Esophagus muscularis mucosa (tissue), 4 donors: ENCODE measurements at regions of chr3 and their contacts with region 1.

Region 1: DNA sequence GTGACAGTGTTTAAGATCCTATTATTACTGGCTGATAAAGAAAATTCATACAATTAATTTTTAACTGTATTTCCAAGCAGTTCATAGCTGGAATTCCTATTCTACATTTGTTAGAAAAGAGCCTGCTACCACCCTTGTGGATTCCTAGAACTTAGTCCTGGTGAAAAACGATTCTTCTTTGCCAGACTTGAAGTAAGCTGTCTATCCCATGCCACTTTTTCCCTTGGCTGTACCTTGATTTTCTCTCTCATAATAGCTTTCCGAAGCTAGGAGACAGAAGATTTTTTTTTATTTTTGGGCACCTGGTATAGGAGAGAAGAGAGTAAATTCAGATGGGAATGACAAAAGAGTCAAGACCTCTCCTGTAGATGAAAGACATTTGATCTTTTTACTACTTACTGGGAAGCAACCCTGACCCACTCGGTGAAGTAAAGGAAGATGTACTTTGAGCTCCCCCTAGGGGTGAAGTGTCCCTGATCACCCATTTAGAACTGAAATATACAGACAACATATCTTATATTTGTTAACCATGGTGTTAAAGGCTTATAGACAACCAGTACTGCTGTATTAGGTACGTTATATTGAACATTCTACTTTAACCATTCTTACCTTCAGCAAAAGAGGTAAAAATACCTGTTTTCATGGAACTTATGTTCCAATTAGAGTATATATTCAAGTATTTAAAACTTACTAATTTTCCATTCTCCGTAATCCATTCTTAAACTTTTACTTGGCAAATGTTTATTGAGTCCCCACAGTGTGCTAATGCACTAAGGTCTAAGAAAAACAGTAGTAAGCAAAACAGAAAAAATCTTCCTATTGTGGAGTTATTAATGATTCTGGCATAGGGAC is 36.2 kb upstream of the C3orf38 start:
- DNase-seq: no peak
- H3K4me3 ChIP-seq: no peak overlapping the region
- H3K27ac ChIP-seq: no peak overlapping the region
- H3K4me1 ChIP-seq: peaks cover 0 to 14% (median 9%) of the 10 kb centered on the region in 4 donors
- H3K27me3 ChIP-seq: no peaks in the 10 kb centered on the region
- CTCF ChIP-seq: peak; percentile 54 to 69 (median 65)
- EP300 ChIP-seq: no peak
- POLR2A ChIP-seq: no peak

Region 2: GRCh38 chr3:87350364-87351199 is 763.0 kb before region 1 on chr3:
- intact Hi-C with region 1: loop called (anchors 10 kb)
- DNase-seq: no peak
- H3K4me3 ChIP-seq: no peak overlapping the region
- H3K27ac ChIP-seq: no peak overlapping the region
- H3K4me1 ChIP-seq: no peaks in the 10 kb centered on the region
- H3K27me3 ChIP-seq: no peaks in the 10 kb centered on the region
- CTCF ChIP-seq: peak in 2 of 3 experiments; percentile 70 to 83
- EP300 ChIP-seq: no peak
- POLR2A ChIP-seq: no peak

Region 3: GRCh38 chr3:87771341-87772192 is 342.0 kb before region 1 on chr3:
- intact Hi-C with region 1: loop called (anchors 10 kb)
- DNase-seq: no peak
- H3K4me3 ChIP-seq: no peak overlapping the region
- H3K27ac ChIP-seq: no peak overlapping the region
- H3K4me1 ChIP-seq: no peaks in the 10 kb centered on the region
- H3K27me3 ChIP-seq: no peaks in the 10 kb centered on the region
- CTCF ChIP-seq: peak in 2 of 3 experiments; percentile 37 to 50
- EP300 ChIP-seq: no peak
- POLR2A ChIP-seq: no peak

Region 4: GRCh38 chr3:88058591-88059368 is 54.8 kb before region 1 on chr3 and contains the starts of genes CGGBP1 and ZNF654:
- intact Hi-C with region 1: loop called (anchors 5 kb)
- DNase-seq: peak; percentile 100
- H3K4me3 ChIP-seq: peak within 1 kb of the TSS; percentile 89 to 94 (median 92)
- H3K27ac ChIP-seq: peak within 1 kb of the TSS; percentile 93 to 97 (median 94)
- H3K4me1 ChIP-seq: peaks cover 29 to 55% (median 52%) of the 10 kb centered on the region in 4 donors
- H3K27me3 ChIP-seq: no peaks in the 10 kb centered on the region
- CTCF ChIP-seq: no peak
- EP300 ChIP-seq: no peak
- POLR2A ChIP-seq: peak; percentile 80
- total RNA-seq, gene CGGBP1: 52.0 to 77.2 (median 58.7) TPM
- total RNA-seq, gene ZNF654: 11.8 to 17.9 (median 16.0) TPM

Region 5: DNA sequence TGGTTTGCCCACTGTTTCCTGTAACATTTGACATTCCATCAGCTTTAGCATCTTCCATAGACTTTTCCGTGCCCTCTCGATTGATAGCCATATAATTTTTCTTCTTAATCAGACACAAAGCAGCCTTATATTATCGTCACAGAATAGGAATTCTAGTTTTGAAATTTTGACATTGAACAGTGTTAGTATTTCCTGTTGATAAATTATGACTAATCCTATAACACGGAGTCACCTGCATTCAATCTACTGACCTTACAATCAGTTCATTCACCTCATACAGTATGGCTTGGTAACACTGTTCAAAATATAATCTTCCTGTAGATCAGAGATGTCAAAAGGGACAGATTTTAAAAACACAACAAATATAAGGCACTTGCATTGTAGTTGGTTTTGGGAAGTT is 459.9 kb after region 1 on chr3:
- intact Hi-C with region 1: no loop called
- DNase-seq: no peak
- H3K4me3 ChIP-seq: no peak overlapping the region
- H3K27ac ChIP-seq: no peak overlapping the region
- H3K4me1 ChIP-seq: no peaks in the 10 kb centered on the region
- H3K27me3 ChIP-seq: no peaks in the 10 kb centered on the region
- CTCF ChIP-seq: no peak
- EP300 ChIP-seq: no peak
- POLR2A ChIP-seq: no peak